ENCODE measurements at regions of chr10 and their contacts with region 1.

Region 1: DNA sequence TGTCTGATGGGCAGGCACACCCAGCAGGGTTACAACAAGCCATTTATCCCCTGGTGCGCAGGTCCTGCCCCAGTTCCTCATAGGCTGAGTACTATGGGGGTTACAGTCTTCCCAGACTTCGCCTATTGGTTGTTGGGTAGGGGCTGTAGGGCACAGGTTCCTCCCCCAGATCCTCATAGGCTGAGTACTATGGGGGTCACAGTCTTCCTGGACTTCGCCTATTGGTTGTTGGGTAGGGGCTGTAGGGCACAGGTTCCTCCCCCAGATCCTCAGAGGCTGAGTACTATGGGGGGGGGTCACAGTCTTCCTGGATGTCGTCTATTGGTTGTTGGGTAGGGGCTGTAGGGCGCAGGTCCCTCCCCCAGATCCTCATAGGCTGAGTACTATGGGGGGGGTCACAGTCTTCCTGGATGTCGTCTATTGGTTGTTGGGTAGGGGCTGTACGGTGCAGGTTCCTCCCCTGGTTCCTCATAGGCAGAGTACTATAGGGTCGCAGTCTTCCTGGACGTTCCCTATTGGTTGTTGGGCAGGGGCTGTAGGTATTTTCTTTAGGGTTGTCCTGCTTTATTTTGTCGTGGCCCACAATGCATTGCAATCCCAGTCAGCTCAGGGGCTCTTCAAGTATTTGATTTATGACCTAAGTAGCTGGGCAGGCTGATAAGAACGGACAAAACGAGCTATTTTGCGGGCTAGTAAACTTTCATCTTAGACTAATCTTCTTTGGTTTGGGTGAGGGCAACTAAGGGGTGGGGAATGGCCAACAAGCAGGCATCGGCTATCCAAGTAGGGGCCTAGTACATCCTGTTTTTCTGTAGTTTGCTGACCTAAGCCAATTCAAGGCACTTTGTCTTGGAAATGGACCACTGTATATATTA is 3.4 kb downstream of the LRRC27 start:
- DNase-seq: peak; percentile 96 to 99
- H3K4me3 ChIP-seq: peak overlapping the region; percentile 39
- H3K4me3 Mint-ChIP-seq: peak overlapping the region; percentile 74
- H3K27ac Mint-ChIP-seq: peak overlapping the region; percentile 82
- H3K4me1 ChIP-seq: peaks cover 12% of the 10 kb centered on the region; the same call in 1 of the 2 replicates
- H3K4me1 Mint-ChIP-seq: peaks cover 20% of the 10 kb centered on the region
- H3K27me3 ChIP-seq: no peaks in the 10 kb centered on the region
- H3K27me3 Mint-ChIP-seq: no peaks in the 10 kb centered on the region
- CTCF ChIP-seq: no peak

Region 2: GRCh38 chr10:132307823-132308587 is 27.4 kb before region 1 on chr10 and contains the start of gene STK32C:
- CTCF ChIA-PET with region 1: interaction called, 5 read pairs
- POLR2A ChIA-PET with region 1: interaction called, 4 read pairs
- intact Hi-C with region 1: loop called (anchors 1 kb)
- DNase-seq: peak; percentile 90 to 91
- H3K4me3 ChIP-seq: peak within 1 kb of the TSS; percentile 94
- H3K4me3 Mint-ChIP-seq: peak within 1 kb of the TSS; percentile 91
- H3K27ac Mint-ChIP-seq: peak within 1 kb of the TSS; percentile 61
- H3K4me1 ChIP-seq: peaks cover 4% of the 10 kb centered on the region; the same call in 1 of the 2 replicates
- H3K4me1 Mint-ChIP-seq: peaks cover 6% of the 10 kb centered on the region
- H3K27me3 ChIP-seq: no peaks in the 10 kb centered on the region
- H3K27me3 Mint-ChIP-seq: peaks cover 4% of the 10 kb centered on the region
- CTCF ChIP-seq: no peak
- total RNA-seq, gene STK32C: 11.9 and 13.3 TPM in 2 replicates

Region 3: DNA sequence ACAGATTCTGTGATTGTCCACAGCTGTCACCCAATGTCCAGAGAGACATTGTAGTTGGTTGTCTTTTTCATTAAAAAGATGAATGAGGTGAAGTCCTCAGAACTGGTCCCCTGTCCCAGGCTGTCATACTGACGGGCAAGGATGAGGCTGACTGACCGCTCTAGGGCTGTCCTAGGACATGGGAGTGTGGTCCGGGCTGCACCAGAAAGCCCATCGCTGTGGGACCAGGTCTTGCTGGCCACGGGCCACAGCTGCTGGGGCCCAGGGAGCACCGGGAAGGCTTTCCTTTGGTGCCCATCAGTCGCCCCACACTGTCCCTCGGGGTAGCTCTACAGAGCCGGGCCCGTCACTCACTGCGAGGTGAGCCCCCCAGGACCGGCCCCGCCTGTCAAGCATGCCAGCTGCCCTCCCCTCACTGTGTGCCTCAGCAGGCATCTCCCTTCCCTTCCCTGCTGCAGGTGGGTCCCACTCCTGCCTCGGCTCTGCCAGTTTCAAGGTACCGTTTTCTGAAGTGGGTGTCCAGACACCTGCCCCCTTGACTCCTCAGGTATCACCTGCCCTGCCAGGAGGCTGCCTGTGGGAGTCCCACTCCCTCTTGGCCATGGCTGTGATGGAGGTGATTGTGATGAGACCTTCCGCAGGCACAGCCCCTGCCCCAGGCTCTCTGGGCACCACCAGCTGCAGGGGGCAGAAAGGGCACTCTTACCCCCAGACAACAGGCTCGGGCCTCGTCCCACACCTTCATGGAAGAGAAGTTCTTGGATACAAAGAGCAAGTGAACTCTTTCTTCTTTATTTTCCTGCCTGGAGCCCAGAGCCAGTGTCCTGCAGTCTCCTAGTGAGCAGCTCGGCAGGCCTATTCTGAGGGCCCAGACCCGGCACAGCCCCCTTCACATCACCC is 18.3 kb after region 1 on chr10:
- CTCF ChIA-PET with region 1: no interaction called
- POLR2A ChIA-PET with region 1: no interaction called
- intact Hi-C with region 1: loop called (anchors 2 kb)
- DNase-seq: no peak
- H3K4me3 ChIP-seq: no peak overlapping the region
- H3K4me3 Mint-ChIP-seq: no peak overlapping the region
- H3K27ac Mint-ChIP-seq: no peak overlapping the region
- H3K4me1 ChIP-seq: no peaks in the 10 kb centered on the region
- H3K4me1 Mint-ChIP-seq: peaks cover 6% of the 10 kb centered on the region
- H3K27me3 ChIP-seq: no peaks in the 10 kb centered on the region
- H3K27me3 Mint-ChIP-seq: no peaks in the 10 kb centered on the region
- CTCF ChIP-seq: no peak

Region 4: DNA sequence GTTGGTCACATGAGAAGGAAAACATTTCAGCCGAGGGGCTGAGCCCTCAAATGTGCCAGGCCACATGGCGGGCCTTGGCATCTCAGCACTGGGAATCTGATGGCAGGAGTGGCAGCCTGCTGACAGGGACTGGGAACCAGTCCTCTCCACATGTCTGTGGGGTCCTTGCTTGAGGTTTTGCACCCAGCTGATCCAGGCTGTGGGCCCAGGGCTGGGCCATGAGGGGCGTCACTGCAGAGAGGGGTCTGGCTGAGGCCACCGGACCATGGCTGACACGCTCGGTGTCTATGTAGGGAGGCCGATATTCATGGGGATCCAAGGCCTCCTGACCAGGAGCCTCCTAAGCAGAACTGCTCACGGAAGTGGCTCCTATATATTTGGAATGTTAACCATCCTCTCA is 30.6 kb after region 1 on chr10:
- CTCF ChIA-PET with region 1: no interaction called
- POLR2A ChIA-PET with region 1: no interaction called
- intact Hi-C with region 1: no loop called
- DNase-seq: no peak
- H3K4me3 ChIP-seq: no peak overlapping the region
- H3K4me3 Mint-ChIP-seq: no peak overlapping the region
- H3K27ac Mint-ChIP-seq: no peak overlapping the region
- H3K4me1 ChIP-seq: no peaks in the 10 kb centered on the region
- H3K4me1 Mint-ChIP-seq: no peaks in the 10 kb centered on the region
- H3K27me3 ChIP-seq: no peaks in the 10 kb centered on the region
- H3K27me3 Mint-ChIP-seq: no peaks in the 10 kb centered on the region
- CTCF ChIP-seq: no peak

Region 5: DNA sequence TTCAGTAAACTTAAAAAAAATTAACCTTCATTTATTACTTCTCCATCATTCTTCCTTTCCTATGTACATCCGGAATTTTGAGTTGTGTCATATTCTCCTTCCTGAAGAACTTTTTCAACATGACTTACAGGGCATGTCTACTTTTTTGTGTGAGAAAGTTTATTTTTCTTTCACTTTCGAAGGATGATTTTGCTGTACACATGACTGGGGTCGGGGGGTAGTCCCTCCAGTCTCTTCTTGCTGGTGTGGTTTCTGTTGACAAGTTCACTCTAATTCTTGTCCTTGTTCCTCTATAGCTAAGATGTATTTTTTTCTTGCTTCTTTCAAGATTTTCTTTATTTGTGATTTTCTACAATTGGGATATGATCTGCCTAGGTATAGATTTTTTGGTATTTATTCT is 258.0 kb after region 1 on chr10:
- CTCF ChIA-PET with region 1: no interaction called
- POLR2A ChIA-PET with region 1: no interaction called
- intact Hi-C with region 1: loop called (anchors 5 kb)
- DNase-seq: no peak
- H3K4me3 ChIP-seq: no peak overlapping the region
- H3K4me3 Mint-ChIP-seq: peak overlapping the region; percentile 41
- H3K27ac Mint-ChIP-seq: peak overlapping the region; percentile 58
- H3K4me1 ChIP-seq: peaks cover 46% of the 10 kb centered on the region
- H3K4me1 Mint-ChIP-seq: peaks cover 47% of the 10 kb centered on the region
- H3K27me3 ChIP-seq: no peaks in the 10 kb centered on the region
- H3K27me3 Mint-ChIP-seq: no peaks in the 10 kb centered on the region
- CTCF ChIP-seq: no peak

Measured in Caco-2 (cell line).